Right ventricle myocardium inferior (tissue), 1 donor: ENCODE measurements at regions of chr2 and their contacts with region 1.

Region 1: DNA sequence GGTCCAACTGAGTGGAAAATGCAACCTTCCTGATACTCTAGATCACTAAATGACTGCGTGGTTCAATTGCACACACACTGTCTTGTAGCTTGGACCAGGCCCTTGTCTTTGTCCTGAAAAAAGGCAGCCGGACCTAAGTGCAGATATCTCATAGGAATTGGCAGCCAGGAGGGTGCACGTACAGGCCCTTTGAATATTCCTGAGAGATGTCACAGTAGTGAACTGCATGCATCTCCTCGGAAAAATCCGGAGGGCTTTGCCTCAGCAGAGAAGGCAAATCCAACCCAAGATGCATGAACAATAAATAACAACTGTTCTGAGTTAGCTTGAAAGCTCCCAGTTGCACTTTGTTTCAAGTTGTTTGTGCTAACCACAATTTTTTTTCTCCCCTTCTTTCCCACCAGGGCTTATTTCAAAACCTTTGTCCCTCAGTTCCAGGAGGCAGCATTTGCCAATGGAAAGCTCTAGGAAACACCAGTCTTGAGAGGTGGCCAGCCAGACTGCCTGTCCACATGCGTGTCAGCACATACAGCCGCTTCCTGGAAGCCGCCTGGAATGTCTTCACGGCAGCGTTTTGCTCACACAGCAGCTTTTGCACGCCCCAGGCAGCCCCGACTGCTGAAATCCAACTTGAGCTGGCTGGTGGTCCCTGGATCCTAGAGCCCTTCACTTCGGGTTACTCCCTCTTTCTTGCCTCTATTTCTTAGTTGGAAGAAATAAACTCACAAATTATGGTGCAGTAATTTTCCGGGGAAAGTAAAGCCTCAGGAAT is 54.4 kb upstream of the FOSL2 start:
- DNase-seq: peak; percentile 89
- ATAC-seq: peak; percentile 70

Region 2: DNA sequence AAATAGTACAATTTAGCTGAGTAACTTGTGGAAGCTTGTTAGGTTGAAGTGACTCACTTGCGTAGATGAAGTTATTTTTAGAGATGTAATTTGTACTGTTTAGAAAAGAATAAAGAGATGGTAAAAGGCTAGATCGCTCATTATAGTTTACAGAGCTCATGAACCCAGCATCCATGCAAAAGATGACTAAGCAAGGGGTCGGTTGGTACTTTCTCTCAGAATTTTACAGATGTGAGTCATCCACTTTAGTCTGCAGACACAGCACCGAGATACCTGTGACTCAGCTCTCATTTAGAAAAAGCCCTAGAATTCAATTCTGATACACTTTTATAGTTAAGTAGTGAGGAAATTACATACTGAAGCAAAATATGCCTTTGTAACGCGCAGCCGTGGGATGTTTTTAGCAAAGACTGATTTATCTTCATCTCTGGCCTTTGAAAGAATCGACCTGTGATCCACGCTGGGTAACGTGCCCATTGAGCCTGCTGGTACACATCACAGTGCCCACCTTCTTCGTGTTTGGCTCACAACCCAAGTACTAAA is 62.1 kb before region 1 on chr2:
- intact Hi-C with region 1: loop called (anchors 5 kb)
- DNase-seq: no peak
- ATAC-seq: no peak

Region 3: GRCh38 chr2:28286678-28287077 is 51.6 kb before region 1 on chr2:
- intact Hi-C with region 1: no loop called
- DNase-seq: no peak
- ATAC-seq: no peak

Region 4: GRCh38 chr2:28311660-28312249 is 26.5 kb before region 1 on chr2:
- intact Hi-C with region 1: loop called (anchors 1 kb)
- DNase-seq: no peak
- ATAC-seq: peak; percentile 53